Left ventricle myocardium superior (tissue), 1 donor: ENCODE measurements at regions of chr3 and their contacts with region 1.

Region 1: GRCh38 chr3:117103675-117104074 is 394.1 kb downstream of the TUSC7 start:
- DNase-seq: no peak
- ATAC-seq: no peak

Region 2: DNA sequence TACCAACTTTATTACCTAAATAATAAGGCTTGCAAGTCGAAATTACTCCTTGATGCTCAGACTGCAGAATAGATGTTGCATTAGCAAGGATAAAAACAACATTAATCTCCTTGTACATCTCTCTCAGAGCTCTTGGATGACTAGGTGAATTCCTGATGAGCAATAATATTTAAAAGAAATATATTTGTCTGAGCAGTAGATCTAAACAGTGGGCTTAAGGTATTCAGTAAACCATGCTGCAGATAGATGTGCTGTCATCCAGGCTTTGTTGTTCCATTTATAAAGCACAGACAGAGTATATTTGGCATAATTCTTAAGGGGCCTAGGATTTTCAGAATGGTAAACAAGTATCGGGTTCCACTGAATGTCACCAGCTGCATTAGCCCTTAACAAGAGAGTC is 137.0 kb before region 1 on chr3:
- intact Hi-C with region 1: loop called (anchors 5 kb)
- DNase-seq: no peak
- ATAC-seq: no peak